Esophagus squamous epithelium (tissue), 5 donors: ENCODE measurements at regions of chr20 and their contacts with region 1.

Region 1: GRCh38 chr20:37534401-37535157 is 6.9 kb upstream of the BLCAP start:
- DNase-seq: no peak
- H3K4me3 ChIP-seq: no peak overlapping the region
- H3K27ac ChIP-seq: no peak overlapping the region
- H3K4me1 ChIP-seq: peaks cover 0 to 20% (median 0%) of the 10 kb centered on the region in 3 donors
- H3K27me3 ChIP-seq: no peaks in the 10 kb centered on the region
- CTCF ChIP-seq: peak; percentile 85 to 93 (median 88)
- POLR2A ChIP-seq: no peak

Region 2: DNA sequence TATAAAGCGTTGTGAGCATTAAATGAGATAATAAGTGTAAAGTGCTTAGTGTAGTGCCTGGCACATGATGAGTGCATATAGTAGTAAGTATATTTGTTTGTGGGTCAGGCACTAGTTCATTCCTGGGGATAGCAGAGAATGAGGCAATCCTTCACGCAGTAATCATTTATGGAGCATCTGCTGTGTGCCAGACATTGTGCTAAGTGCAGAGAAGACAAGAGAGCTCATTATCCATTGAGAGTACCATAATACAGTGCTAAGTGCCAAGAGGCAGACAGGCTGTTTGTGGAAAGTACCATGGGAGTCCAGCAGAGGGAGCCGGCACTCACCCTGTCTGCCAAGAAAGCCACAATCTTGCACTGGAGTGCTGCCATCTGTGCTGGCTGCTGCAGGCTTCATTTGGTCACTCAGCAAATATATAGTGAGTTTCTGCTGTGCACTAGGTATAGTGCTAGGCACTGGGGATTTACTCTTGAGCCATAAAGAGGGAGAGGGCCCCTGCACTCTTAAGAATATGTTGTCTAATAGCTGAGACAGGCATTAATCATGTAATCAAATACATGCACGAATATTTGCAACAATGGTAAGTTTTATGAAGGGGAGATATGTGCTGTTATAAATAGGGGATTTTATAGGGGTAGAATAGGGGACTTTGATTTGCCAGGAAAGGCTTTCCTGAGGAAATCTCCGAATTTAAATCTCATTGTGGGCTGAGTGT is 342.3 kb before region 1 on chr20:
- intact Hi-C with region 1: loop called (anchors 5 kb)
- DNase-seq: peak; percentile 16
- H3K4me3 ChIP-seq: no peak overlapping the region
- H3K27ac ChIP-seq: no peak overlapping the region
- H3K4me1 ChIP-seq: peaks cover 6 to 77% (median 10%) of the 10 kb centered on the region in 3 donors
- H3K27me3 ChIP-seq: no peaks in the 10 kb centered on the region
- CTCF ChIP-seq: peak; percentile 56 to 91 (median 90)
- POLR2A ChIP-seq: no peak

Region 3: DNA sequence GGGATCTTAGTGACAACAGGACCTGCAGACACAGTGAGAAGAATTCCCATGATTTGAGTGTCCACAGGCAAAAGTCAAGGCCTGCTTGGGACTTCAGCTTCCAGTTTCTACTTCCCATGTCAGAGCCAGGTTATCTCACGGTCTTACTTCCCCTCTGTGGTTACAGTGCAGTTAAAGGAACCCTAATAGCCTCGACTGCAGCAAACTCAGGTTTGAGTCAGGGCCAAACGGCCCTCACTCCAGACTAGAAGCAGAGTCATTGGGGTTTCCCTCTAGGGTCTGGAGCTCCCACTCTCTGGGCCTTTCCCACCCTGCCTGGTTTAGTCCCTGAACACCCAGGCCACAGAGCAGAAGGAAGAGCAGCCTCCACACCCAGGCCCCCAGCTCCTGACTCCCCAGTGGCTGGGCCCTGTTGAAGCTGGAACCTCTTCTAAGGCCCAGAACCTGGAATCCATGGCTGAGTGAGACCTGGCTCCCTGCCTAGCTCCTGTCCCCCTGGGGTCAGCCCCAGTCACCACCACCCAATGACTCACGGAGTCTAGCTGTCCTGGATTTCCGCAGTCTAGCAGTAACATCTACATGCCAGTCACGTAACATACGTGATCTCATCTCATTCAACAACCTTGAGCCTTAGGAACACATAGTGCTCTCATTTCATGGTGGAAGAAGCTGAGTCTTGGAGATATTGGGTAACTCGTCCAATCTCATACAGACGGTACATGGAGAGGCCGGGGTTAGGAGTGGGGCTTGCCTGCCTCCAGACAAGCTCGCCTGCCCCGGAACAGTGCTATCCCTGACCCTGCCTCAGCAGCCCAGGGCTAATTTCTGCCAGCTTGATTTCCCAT is 263.8 kb before region 1 on chr20:
- intact Hi-C with region 1: loop called (anchors 5 kb)
- DNase-seq: no peak
- H3K4me3 ChIP-seq: no peak overlapping the region
- H3K27ac ChIP-seq: peak overlapping the region in 1 of 4 donors; percentile 21
- H3K4me1 ChIP-seq: peaks cover 0 to 4% (median 4%) of the 10 kb centered on the region in 3 donors
- H3K27me3 ChIP-seq: no peaks in the 10 kb centered on the region
- CTCF ChIP-seq: no peak
- POLR2A ChIP-seq: no peak

Region 4: DNA sequence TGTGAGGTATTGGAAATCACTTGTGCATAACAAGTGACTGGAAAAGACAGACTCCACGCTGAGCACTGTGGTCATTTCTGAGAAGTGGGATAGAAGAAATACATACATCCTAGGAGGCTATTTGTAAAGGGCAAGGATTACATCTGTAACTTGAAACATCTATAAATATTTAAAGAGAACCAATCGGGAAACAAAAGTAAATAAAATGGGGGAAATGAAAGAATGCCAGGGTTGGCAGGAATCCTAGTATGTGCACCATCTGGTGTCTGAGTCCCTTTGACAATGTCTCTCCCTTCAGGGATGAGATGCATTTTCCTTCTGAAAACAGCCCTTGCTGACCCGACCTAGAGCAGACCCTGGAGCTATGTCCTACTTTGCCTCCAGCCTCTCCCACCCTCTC is 421.5 kb after region 1 on chr20:
- intact Hi-C with region 1: no loop called
- DNase-seq: no peak
- H3K4me3 ChIP-seq: no peak overlapping the region
- H3K27ac ChIP-seq: no peak overlapping the region
- H3K4me1 ChIP-seq: no peaks in the 10 kb centered on the region
- H3K27me3 ChIP-seq: peaks cover 0 to 8% (median 0%) of the 10 kb centered on the region in 4 donors
- CTCF ChIP-seq: no peak
- POLR2A ChIP-seq: no peak